ENCODE measurements at regions of chr9 and their contacts with region 1.

Region 1: DNA sequence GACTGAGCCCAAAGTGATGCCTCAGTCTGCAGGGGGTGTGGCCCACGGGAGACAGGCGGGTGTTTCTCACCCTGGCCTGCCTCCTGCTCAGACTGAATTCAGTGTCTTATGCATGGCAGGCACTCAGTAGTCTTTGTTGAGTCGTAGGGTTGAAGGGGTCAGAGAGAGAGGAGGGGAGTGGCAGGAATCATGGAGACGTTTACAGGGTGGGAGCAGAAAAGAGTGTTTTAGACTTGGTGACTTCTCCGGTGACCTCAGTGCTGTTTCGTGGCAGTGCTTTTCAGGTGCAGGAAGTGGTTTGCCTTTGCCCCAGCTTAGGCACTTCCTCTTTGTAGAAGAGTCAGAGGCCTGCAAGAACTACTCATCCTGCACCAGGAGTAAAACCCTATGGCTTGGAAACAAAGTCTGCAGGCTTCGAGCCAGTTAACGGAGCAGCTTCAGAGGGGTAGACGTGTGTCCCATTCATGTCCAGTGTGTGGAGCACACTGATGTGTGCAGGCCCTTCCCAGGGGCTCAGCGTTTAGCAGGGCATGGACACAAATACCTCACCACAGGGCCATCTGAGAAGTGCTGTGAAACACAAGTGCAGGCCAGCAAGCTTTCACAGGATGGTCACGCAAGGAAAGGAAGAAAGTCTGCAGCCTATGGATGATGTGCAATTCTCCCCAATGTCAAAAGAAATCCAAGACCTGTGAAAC is 24.5 kb upstream of the SEMA4D start:
- DNase-seq: peak; percentile 59 to 93
- ATAC-seq: peak; percentile 72 to 88 (median 85)
- H3K4me3 ChIP-seq: no peak overlapping the region
- H3K4me3 Mint-ChIP-seq: peak overlapping the region; percentile 85
- H3K27ac ChIP-seq: peak overlapping the region; percentile 83
- H3K27ac Mint-ChIP-seq: peak overlapping the region; percentile 91 to 95
- H3K4me1 ChIP-seq: peaks cover 93% of the 10 kb centered on the region
- H3K4me1 Mint-ChIP-seq: peaks cover 77 to 85% of the 10 kb centered on the region in 2 donors
- H3K27me3 ChIP-seq: no peaks in the 10 kb centered on the region
- H3K27me3 Mint-ChIP-seq: no peaks in the 10 kb centered on the region
- CTCF ChIP-seq: no peak

Region 2: DNA sequence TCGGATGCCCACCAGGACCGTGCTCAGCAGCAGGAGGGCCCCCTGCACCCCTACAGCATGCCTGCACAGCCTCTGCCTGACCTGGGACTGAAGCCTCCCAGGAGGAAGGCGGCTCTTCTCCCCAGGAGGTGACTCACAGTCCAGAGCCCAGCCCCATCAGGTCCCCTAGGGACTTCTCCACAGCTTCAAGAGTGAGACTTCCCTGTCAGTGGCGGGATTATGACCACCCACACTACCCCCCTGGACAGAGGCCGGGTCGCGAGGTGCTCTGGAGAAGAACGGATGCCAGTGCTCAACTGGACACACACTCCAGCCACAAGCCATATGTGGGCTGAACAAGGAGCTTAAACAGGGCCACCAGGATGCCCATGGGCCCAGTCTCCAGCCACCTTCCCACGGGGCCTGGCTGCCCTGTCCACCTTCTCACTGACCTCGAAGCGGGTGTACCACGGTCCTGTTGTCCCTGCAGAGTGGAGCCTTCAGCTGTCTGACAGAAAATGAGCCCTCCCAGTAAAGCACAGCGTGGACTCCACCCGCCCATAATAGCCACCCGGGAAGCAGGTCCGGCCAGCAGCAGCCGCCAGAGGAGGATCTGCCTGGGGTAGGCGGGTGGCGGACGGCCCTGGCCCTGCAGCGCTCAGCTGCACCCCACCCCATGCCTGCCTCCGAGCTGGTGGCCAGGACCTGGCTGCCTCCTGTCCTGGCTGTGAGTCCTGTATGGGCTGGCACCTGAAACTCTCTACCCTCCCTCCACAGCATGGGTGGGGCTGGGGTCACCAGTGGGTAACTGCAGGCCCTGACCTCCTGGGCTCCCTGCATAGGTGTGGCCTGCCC is 79.2 kb before region 1 on chr9:
- intact Hi-C with region 1: loop called (anchors 2 kb)
- DNase-seq: no peak
- ATAC-seq: no peak
- H3K4me3 ChIP-seq: no peak overlapping the region
- H3K4me3 Mint-ChIP-seq: peak overlapping the region; percentile 92
- H3K27ac ChIP-seq: peak overlapping the region; percentile 37
- H3K27ac Mint-ChIP-seq: peak overlapping the region; percentile 93 to 97
- H3K4me1 ChIP-seq: peaks cover 95% of the 10 kb centered on the region
- H3K4me1 Mint-ChIP-seq: peaks cover 63 to 86% of the 10 kb centered on the region in 2 donors
- H3K27me3 ChIP-seq: no peaks in the 10 kb centered on the region
- H3K27me3 Mint-ChIP-seq: no peaks in the 10 kb centered on the region
- CTCF ChIP-seq: no peak

Region 3: DNA sequence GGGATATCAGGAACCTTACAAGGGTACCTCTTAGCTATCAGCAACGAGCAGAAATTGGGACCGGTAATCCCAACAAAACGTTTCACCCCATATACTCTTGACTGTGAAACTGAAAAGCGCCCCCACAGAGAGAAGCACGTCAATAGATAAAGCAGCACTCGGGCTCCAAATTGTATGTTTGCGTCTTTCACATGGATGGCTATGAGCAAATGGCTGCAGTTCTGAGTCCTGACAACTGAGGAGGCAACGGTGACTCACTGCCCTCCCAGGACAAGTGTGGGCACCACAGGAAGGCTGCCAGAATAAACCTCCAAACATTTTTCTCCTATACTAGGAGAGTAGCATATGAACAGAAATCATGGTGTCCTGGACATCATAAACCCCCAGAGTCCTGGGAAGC is 61.1 kb before region 1 on chr9:
- intact Hi-C with region 1: loop called (anchors 1 kb)
- DNase-seq: peak in 1 of 2 donors; percentile 44
- ATAC-seq: no peak
- H3K4me3 ChIP-seq: no peak overlapping the region
- H3K4me3 Mint-ChIP-seq: no peak overlapping the region
- H3K27ac ChIP-seq: no peak overlapping the region
- H3K27ac Mint-ChIP-seq: no peak overlapping the region
- H3K4me1 ChIP-seq: peaks cover 93% of the 10 kb centered on the region
- H3K4me1 Mint-ChIP-seq: peaks cover 81 to 84% of the 10 kb centered on the region in 2 donors
- H3K27me3 ChIP-seq: no peaks in the 10 kb centered on the region
- H3K27me3 Mint-ChIP-seq: no peaks in the 10 kb centered on the region
- CTCF ChIP-seq: no peak

Region 4: GRCh38 chr9:89477811-89478630 is 44.4 kb before region 1 on chr9:
- intact Hi-C with region 1: no loop called
- DNase-seq: peak in 1 of 2 donors; percentile 70
- ATAC-seq: peak; percentile 27 to 44 (median 44)
- H3K4me3 ChIP-seq: no peak overlapping the region
- H3K4me3 Mint-ChIP-seq: peak overlapping the region; percentile 80
- H3K27ac ChIP-seq: peak overlapping the region; percentile 7
- H3K27ac Mint-ChIP-seq: peak overlapping the region; percentile 87 to 91
- H3K4me1 ChIP-seq: peaks cover 77% of the 10 kb centered on the region
- H3K4me1 Mint-ChIP-seq: peaks cover 84 to 92% of the 10 kb centered on the region in 2 donors
- H3K27me3 ChIP-seq: no peaks in the 10 kb centered on the region
- H3K27me3 Mint-ChIP-seq: no peaks in the 10 kb centered on the region
- CTCF ChIP-seq: no peak

Region 5: GRCh38 chr9:89536145-89536574 is 13.8 kb after region 1 on chr9:
- intact Hi-C with region 1: loop called (anchors 1 kb)
- DNase-seq: peak in 1 of 2 donors; percentile 79
- ATAC-seq: peak; percentile 79 to 90 (median 86)
- H3K4me3 ChIP-seq: no peak overlapping the region
- H3K4me3 Mint-ChIP-seq: peak overlapping the region; percentile 74
- H3K27ac ChIP-seq: peak overlapping the region; percentile 93
- H3K27ac Mint-ChIP-seq: peak overlapping the region; percentile 85 to 98
- H3K4me1 ChIP-seq: peaks cover 88% of the 10 kb centered on the region
- H3K4me1 Mint-ChIP-seq: peaks cover 90 to 92% of the 10 kb centered on the region in 2 donors
- H3K27me3 ChIP-seq: no peaks in the 10 kb centered on the region
- H3K27me3 Mint-ChIP-seq: no peaks in the 10 kb centered on the region
- CTCF ChIP-seq: no peak

Region 6: GRCh38 chr9:89549031-89549644 is 26.7 kb after region 1 on chr9:
- intact Hi-C with region 1: no loop called
- DNase-seq: peak; percentile 81 to 93
- ATAC-seq: peak; percentile 96 to 100 (median 100)
- H3K4me3 ChIP-seq: no peak overlapping the region
- H3K4me3 Mint-ChIP-seq: no peak overlapping the region
- H3K27ac ChIP-seq: no peak overlapping the region
- H3K27ac Mint-ChIP-seq: peak overlapping the region; percentile 8 to 70
- H3K4me1 ChIP-seq: peaks cover 11% of the 10 kb centered on the region
- H3K4me1 Mint-ChIP-seq: peaks cover 0 to 13% of the 10 kb centered on the region in 2 donors
- H3K27me3 ChIP-seq: no peaks in the 10 kb centered on the region
- H3K27me3 Mint-ChIP-seq: no peaks in the 10 kb centered on the region
- CTCF ChIP-seq: peak; percentile 97

Measured in natural killer cell (primary cell).